Activated CD4-positive, alpha-beta T cell treated with anti-CD3 and anti-CD28 coated beads for 36 hours (primary cell): ENCODE measurements at regions of chr7 and their contacts with region 1.

Region 1: GRCh38 chr7:147803606-147804005 is 787.0 kb upstream of the C7orf33 start:
- DNase-seq: no peak
- ATAC-seq: no peak
- H3K4me3 Mint-ChIP-seq: no peak overlapping the region
- H3K27ac Mint-ChIP-seq: no peak overlapping the region
- H3K4me1 Mint-ChIP-seq: no peaks in the 10 kb centered on the region
- H3K27me3 Mint-ChIP-seq: no peaks in the 10 kb centered on the region

Region 2: GRCh38 chr7:147586526-147586925 is 217.1 kb before region 1 on chr7:
- CTCF ChIA-PET with region 1: no interaction called
- POLR2A ChIA-PET with region 1: no interaction called
- intact Hi-C with region 1: no loop called
- DNase-seq: no peak
- ATAC-seq: no peak
- H3K4me3 Mint-ChIP-seq: no peak overlapping the region
- H3K27ac Mint-ChIP-seq: no peak overlapping the region
- H3K4me1 Mint-ChIP-seq: no peaks in the 10 kb centered on the region
- H3K27me3 Mint-ChIP-seq: no peaks in the 10 kb centered on the region

Region 3: GRCh38 chr7:147818317-147818716 is 14.7 kb after region 1 on chr7:
- CTCF ChIA-PET with region 1: no interaction called
- POLR2A ChIA-PET with region 1: no interaction called
- intact Hi-C with region 1: no loop called
- DNase-seq: no peak
- ATAC-seq: no peak
- H3K4me3 Mint-ChIP-seq: no peak overlapping the region
- H3K27ac Mint-ChIP-seq: no peak overlapping the region
- H3K4me1 Mint-ChIP-seq: no peaks in the 10 kb centered on the region
- H3K27me3 Mint-ChIP-seq: no peaks in the 10 kb centered on the region

Region 4: DNA sequence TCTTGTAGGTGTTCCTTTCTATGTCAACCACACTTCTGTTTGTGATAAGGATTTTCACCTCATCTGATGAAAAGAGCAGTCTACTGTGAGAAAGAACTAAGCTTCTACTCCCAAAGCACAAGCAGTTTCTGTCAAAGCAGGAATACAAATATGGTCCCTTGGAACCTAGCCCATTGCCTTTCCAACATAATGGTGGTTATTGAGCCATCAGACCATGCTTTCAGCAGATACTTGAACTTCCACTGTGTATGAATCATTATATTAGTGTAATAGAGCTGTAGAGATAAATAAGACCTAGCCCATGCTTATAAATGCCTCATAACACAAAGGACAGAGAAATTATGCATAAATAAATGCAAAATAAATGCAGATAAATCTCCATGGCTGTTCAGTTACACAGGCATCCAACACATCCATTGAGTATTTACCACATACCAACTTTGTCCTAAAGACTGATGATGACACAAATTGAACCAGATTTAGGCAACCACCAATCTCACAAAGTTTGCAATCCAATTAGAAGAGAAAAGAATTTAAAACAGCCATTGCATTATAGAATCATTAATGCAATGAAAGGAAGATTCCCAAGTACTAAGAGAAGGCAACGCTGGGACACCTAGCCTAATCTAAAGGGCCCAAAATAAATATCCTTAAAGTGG is 57.6 kb after region 1 on chr7:
- CTCF ChIA-PET with region 1: interaction called, 3 read pairs
- POLR2A ChIA-PET with region 1: no interaction called
- intact Hi-C with region 1: loop called in 1 of 2 experiments (anchors 10 kb)
- DNase-seq: no peak
- ATAC-seq: no peak
- H3K4me3 Mint-ChIP-seq: no peak overlapping the region
- H3K27ac Mint-ChIP-seq: no peak overlapping the region
- H3K4me1 Mint-ChIP-seq: no peaks in the 10 kb centered on the region
- H3K27me3 Mint-ChIP-seq: no peaks in the 10 kb centered on the region

Region 5: DNA sequence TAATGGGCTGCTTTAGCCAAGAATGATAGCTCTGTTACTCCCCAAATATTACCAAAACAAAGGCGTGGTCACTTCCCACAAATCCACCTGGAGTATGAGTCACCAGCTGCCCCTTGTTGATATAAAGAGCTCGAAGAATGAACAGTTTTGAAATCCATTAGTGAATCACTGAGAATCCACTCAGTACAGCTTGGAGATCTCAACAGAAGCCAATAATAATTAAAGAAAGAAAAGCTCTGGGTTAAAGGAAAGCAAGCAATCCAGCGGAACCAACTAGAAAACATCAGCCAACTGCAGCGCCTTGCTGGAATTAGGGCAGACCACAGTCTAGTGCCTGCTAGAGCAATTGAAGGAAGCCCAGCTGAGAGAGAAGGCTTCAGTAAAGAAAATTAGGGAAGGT is 210.9 kb after region 1 on chr7:
- CTCF ChIA-PET with region 1: no interaction called
- POLR2A ChIA-PET with region 1: no interaction called
- intact Hi-C with region 1: no loop called
- DNase-seq: no peak
- ATAC-seq: no peak
- H3K4me3 Mint-ChIP-seq: no peak overlapping the region
- H3K27ac Mint-ChIP-seq: no peak overlapping the region
- H3K4me1 Mint-ChIP-seq: no peaks in the 10 kb centered on the region
- H3K27me3 Mint-ChIP-seq: no peaks in the 10 kb centered on the region

Region 6: GRCh38 chr7:148211740-148212151 is 408.1 kb after region 1 on chr7:
- CTCF ChIA-PET with region 1: no interaction called
- POLR2A ChIA-PET with region 1: no interaction called
- intact Hi-C with region 1: no loop called
- DNase-seq: no peak
- ATAC-seq: no peak
- H3K4me3 Mint-ChIP-seq: no peak overlapping the region
- H3K27ac Mint-ChIP-seq: no peak overlapping the region
- H3K4me1 Mint-ChIP-seq: no peaks in the 10 kb centered on the region
- H3K27me3 Mint-ChIP-seq: peaks cover 12% of the 10 kb centered on the region